Dendritic cell treated with granulocyte-macrophage colony-stimulating factor and Interleukin-4, amounts not matched to agents 40 ng/mL and 50 ng/mL, for 4 days (primary cell): ENCODE measurements at regions of chr2 and their contacts with region 1.

Region 1: GRCh38 chr2:162343824-162344616 is at the start of gene GCA:
- H3K4me3 Mint-ChIP-seq: peak within 1 kb of the TSS; percentile 91
- H3K27ac Mint-ChIP-seq: peak within 1 kb of the TSS; percentile 97
- H3K4me1 Mint-ChIP-seq: peaks cover 35% of the 10 kb centered on the region
- H3K27me3 Mint-ChIP-seq: no peaks in the 10 kb centered on the region

Region 2: GRCh38 chr2:162318328-162319180 is 25.5 kb before region 1 on chr2 and contains the start of gene IFIH1:
- intact Hi-C with region 1: loop called (anchors 1 kb)
- H3K4me3 Mint-ChIP-seq: peak within 1 kb of the TSS; percentile 89
- H3K27ac Mint-ChIP-seq: peak within 1 kb of the TSS; percentile 100
- H3K4me1 Mint-ChIP-seq: peaks cover 51% of the 10 kb centered on the region
- H3K27me3 Mint-ChIP-seq: no peaks in the 10 kb centered on the region

Region 3: DNA sequence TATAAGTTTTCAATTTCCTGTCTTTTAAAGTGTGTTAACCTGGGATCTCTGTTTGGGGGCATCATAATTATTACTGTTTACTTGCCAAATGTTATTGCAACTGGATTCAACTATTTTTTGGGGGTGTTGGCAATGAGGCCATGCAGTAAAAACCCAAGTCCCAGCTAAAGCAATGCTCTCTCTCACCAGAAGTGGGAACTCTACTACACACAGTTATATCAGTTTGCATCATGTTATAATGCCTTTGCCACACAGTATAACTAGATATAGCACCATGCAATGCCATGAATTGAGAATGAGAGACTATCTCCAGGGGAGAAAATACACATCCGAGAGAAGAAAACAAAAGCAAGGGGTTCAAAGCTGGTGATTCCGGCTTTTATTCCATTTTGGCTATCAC is 78.9 kb after region 1 on chr2:
- intact Hi-C with region 1: no loop called
- H3K4me3 Mint-ChIP-seq: no peak overlapping the region
- H3K27ac Mint-ChIP-seq: no peak overlapping the region
- H3K4me1 Mint-ChIP-seq: no peaks in the 10 kb centered on the region
- H3K27me3 Mint-ChIP-seq: no peaks in the 10 kb centered on the region